ENCODE measurements at regions of chr7 and their contacts with region 1.

Region 1: GRCh38 chr7:103413407-103413806 is 32.6 kb downstream of the SLC26A5 start:
- DNase-seq: no peak
- ATAC-seq: no peak
- H3K4me3 ChIP-seq: no peak overlapping the region
- H3K27ac ChIP-seq: no peak overlapping the region
- H3K4me1 ChIP-seq: no peaks in the 10 kb centered on the region
- H3K27me3 ChIP-seq: no peaks in the 10 kb centered on the region
- CTCF ChIP-seq: no peak
- POLR2A ChIP-seq: no peak

Region 2: DNA sequence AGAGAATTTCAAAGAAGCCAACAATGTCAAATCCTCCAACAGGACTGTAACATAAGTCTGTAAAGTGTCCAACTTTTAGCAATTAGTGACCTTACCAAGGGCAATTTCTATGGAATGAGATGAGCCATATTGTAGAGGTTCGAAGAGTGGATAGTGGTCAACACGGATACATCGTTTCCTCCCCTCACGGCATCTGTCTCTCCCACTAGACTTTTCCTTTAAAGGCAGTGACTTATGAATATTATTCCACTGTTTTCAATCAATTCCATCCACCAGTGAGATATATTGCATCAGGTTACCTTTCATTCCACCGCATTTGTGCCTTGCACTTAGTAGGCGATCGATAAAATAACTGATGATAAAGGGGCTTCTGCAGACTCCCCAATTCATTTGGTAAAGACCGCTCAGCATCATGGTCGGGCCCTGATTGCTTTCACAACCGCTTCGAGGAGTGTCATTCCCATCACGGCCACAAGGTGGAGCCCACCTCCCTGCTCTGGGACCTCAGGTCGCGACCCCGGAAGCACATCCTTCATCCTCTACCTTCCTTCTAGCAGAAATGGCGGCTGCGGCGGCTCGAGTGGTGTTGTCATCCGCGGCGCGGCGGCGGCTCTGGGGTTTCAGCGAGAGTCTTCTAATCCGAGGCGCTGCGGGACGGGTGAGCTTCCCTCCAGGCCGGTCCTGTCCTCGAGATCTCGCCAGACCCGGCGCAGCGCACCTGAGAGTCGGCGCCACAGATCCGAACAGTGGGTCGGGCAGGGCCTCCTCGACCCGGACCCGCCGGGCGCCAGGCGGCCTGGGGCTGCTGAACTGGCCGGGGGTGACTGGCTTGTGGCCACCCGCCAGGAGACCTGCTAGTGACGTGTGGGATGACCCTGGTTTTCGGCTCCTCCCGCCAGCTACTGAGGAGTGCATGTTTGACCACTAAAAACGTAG is 116.2 kb before region 1 on chr7 and contains the start of gene PMPCB:
- in situ Hi-C with region 1: no loop called
- intact Hi-C with region 1: loop called (anchors 5 kb)
- DNase-seq: peak; percentile 87 to 93
- ATAC-seq: peak; percentile 97 to 99
- H3K4me3 ChIP-seq: peak within 1 kb of the TSS; percentile 75 to 96 (median 88)
- H3K27ac ChIP-seq: peak within 1 kb of the TSS; percentile 76 to 87 (median 82)
- H3K4me1 ChIP-seq: peaks cover 11 to 14% of the 10 kb centered on the region in 2 donors
- H3K27me3 ChIP-seq: no peaks in the 10 kb centered on the region
- CTCF ChIP-seq: peak; percentile 94 to 98 (median 94)
- POLR2A ChIP-seq: peak in 1 of 2 donors; percentile 27
- total RNA-seq, gene PMPCB: 25.1 to 51.3 (median 40.2) TPM